Cardiac septum (tissue), 1 donor: ENCODE measurements at regions of chr7 and their contacts with region 1.

Region 1: DNA sequence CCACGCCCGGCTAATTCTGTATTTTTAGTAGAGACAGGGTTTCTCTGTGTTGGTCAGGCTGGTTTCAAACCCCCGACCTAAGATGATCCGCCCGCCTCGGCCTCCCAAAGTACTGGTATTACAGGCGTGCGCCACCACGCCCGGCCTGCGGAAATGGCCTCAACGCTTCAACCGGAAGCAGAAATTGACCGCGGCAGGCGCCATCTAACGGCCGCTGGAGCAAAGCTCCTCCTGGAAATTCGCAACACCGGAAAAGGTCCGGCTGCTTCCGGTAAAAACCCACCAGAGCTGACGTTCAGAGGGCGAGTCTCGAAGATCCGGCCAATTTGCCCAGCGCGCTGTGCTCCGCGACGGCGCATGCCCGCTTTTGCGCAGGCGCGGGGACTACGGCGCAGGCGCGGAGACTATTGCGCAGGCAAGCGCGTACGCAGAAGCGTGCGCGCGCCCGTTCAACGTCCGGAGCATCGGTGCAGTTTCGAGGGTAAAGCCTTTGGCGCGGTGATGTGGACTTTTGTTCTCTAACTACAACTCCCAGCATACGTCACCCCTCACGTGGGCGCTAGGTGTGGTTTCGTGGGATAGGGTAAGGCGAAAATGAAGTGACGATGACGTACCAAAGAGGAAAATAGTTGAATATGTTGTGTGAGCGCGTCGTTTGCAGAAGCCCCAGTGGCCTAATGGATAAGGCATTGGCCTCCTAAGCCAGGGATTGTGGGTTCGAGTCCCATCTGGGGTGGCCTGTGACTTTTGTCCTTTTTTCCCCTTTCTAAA is 915 bp upstream of the FMC1 start:
- DNase-seq: peak; percentile 98

Region 2: DNA sequence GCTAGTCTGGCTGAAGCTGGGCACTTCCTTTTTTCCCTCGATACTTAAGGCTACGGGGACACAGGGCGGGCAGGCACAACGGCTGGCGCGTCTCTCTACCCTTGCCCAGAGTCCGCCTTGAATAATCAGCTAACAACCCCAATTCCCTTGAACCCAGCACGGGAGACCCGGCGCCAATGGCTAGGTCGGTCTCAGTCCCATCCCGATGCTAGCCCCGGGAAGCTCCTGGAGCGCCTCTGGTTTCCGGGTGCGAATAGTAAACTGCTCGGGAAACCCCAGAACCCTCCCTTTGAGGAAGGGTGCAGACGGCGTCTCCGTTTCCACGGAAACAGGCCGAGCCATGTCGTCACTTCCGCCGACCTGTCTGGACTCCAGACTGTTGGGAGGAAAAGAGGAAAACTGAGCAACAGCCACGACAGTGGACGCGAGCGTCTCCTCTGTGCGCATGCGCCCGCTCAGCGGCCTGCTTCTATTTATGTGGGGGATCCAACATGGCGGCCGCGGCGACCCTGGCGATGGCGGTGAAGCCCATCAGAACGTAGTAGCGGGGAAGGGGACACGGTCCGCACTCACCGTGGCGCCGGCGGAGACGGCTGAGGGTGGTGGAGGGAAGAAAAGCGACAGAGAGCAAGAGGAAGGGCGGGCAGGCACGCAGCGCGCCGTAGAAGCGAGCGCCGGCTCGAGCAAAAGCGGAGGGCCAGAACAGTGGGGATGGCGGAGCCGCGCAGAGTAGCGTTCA is 109.3 kb before region 1 on chr7 and contains the start of gene UBN2:
- intact Hi-C with region 1: loop called (anchors 5 kb)
- DNase-seq: peak; percentile 99
- total RNA-seq, gene UBN2: 20.2 TPM

Region 3: GRCh38 chr7:139359366-139360209 is 19.4 kb after region 1 on chr7 and contains the start of gene LUC7L2:
- intact Hi-C with region 1: loop called (anchors 1 kb)
- DNase-seq: peak; percentile 100
- total RNA-seq, gene LUC7L2: 64.9 TPM

Region 4: GRCh38 chr7:139416405-139416804 is 76.2 kb after region 1 on chr7:
- intact Hi-C with region 1: no loop called
- DNase-seq: no peak